BJ (cell line): ENCODE measurements at regions of chr6 and their contacts with region 1.

Region 1: GRCh38 chr6:44475779-44476434 is 88.4 kb downstream of the CDC5L start:
- DNase-seq: no peak
- H3K4me3 ChIP-seq: no peak overlapping the region
- H3K27me3 ChIP-seq: 0 out of 2 replicates have a peak, but pooled peaks cover 2% of the 10 kb centered on the region
- CTCF ChIP-seq: peak; percentile 98

Region 2: DNA sequence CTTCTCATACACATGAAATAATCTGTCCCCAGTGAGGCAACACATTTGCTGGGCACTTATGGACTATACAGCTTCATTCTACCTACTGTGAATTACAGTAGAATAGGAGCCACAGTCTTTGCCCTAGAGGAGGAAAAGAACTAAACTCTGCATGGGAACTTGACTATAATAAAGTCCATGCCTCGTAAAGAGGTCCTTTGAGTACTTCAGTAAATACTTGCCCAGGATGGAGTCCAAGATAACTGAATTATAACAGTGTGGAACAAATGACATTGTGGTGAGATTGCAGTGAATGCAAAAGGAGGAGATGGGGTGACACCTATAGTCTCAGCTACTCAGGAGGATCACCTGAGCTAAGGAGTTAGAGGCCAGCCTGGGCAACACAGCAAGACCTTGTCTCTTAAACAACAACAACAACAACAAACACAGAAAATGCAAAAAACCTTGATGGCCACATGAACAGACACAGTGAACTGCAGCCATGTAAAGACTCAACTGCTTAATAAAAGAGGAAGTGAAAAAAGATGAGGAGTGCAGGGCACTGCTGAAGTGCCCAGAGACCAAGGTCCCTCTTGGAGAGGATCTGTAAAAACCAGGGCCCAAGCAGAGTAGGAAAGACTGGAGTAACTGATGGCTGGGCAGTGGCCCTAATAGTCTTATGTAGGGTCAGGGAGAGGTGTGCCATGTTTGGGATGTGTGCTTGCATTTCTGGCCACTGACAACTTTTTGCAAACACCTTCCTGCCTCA is 792.0 kb before region 1 on chr6:
- CTCF ChIA-PET with region 1: no interaction called
- POLR2A ChIA-PET with region 1: no interaction called
- DNase-seq: no peak
- H3K4me3 ChIP-seq: no peak overlapping the region
- H3K27me3 ChIP-seq: no peaks in the 10 kb centered on the region
- CTCF ChIP-seq: no peak

Region 3: GRCh38 chr6:44257025-44257752 is 218.7 kb before region 1 on chr6 and contains the start of gene SLC35B2:
- CTCF ChIA-PET with region 1: no interaction called
- POLR2A ChIA-PET with region 1: no interaction called
- DNase-seq: no peak
- H3K4me3 ChIP-seq: peak within 1 kb of the TSS; percentile 81
- H3K27me3 ChIP-seq: no peaks in the 10 kb centered on the region
- CTCF ChIP-seq: peak; percentile 41
- polyA plus RNA-seq, gene SLC35B2: 104 and 145 TPM in 2 replicates

Region 4: GRCh38 chr6:44489910-44490604 is 14.2 kb after region 1 on chr6:
- CTCF ChIA-PET with region 1: interaction called, 46 read pairs
- POLR2A ChIA-PET with region 1: no interaction called
- DNase-seq: peak; percentile 96
- H3K4me3 ChIP-seq: no peak overlapping the region
- H3K27me3 ChIP-seq: no peaks in the 10 kb centered on the region
- CTCF ChIP-seq: no peak

Region 5: DNA sequence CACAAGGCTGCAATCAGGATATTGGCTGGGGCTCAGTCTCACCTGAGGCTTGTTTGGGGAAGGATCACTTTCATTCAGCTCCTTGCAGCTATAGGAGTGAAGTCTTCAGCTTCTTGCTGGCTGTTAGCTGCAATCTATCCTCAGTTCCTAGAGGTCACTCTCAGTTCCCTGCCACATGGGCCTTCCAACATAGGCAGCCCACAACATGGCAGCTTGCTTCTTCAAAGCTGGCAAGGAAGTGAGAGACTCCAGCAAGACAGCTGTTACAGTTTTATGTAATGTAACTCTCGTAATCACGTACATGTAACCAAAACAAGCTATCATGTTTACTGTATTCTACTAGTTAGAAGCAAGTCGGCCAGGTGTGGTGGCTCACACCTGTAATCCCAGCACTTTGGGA is 138.5 kb after region 1 on chr6:
- CTCF ChIA-PET with region 1: interaction called, 15 read pairs
- POLR2A ChIA-PET with region 1: no interaction called
- DNase-seq: no peak
- H3K4me3 ChIP-seq: no peak overlapping the region
- H3K27me3 ChIP-seq: peaks cover 7% of the 10 kb centered on the region; the same call in 1 of the 2 replicates
- CTCF ChIP-seq: no peak

Region 6: GRCh38 chr6:44645276-44645675 is 169.4 kb after region 1 on chr6:
- CTCF ChIA-PET with region 1: interaction called, 11 read pairs
- POLR2A ChIA-PET with region 1: no interaction called
- DNase-seq: no peak
- H3K4me3 ChIP-seq: no peak overlapping the region
- H3K27me3 ChIP-seq: no peaks in the 10 kb centered on the region
- CTCF ChIP-seq: peak; percentile 15; the same call in 1 of the 2 replicates

Region 7: GRCh38 chr6:45421709-45422502 is 946.0 kb after region 1 on chr6:
- CTCF ChIA-PET with region 1: interaction called, 16 read pairs
- POLR2A ChIA-PET with region 1: no interaction called
- DNase-seq: no peak
- H3K4me3 ChIP-seq: peak overlapping the region; percentile 57
- H3K27me3 ChIP-seq: no peaks in the 10 kb centered on the region
- CTCF ChIP-seq: peak; percentile 60

Region 8: GRCh38 chr6:45577836-45578504 is 1102.1 kb after region 1 on chr6:
- CTCF ChIA-PET with region 1: no interaction called
- POLR2A ChIA-PET with region 1: no interaction called
- DNase-seq: peak; percentile 22
- H3K4me3 ChIP-seq: no peak overlapping the region
- H3K27me3 ChIP-seq: no peaks in the 10 kb centered on the region
- CTCF ChIP-seq: 0 out of 2 replicates have a peak, but pooled peaks have one; percentile 18

Region 9: GRCh38 chr6:45930420-45931040 is 1454.6 kb after region 1 on chr6:
- CTCF ChIA-PET with region 1: interaction called, 16 read pairs
- POLR2A ChIA-PET with region 1: interaction called, 4 read pairs
- DNase-seq: no peak
- H3K4me3 ChIP-seq: no peak overlapping the region
- H3K27me3 ChIP-seq: peaks cover 10% of the 10 kb centered on the region
- CTCF ChIP-seq: peak; percentile 99